ENCODE measurements at regions of chr7 and their contacts with region 1.

Region 1: DNA sequence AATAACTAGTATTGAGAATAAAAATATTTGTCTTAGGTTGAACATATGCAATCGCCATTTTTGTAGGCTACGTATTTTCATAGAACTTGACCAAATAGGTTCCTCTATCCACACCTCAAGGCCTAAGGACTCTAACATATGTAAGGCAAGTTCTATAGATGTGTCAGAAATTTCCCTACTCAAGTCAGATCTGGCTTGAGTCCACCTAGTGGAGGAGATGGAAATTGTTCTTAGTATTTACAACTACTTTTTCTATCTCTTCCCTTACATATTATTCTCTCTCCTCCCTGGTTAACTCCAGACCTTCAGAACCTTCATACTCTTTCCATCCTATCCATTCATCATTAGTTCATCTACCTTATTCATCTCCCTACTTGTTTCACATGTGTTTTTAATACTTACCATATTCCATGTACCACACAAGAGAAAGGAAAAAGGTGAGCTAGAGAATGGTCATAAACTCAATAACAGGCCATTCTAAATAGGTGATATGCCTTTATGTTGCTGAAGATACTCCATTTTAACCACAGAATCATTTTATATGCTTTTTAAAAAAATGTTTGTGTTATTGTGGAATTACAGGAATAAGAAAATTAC is 174.5 kb upstream of the HDAC9 start:
- DNase-seq: peak; percentile 68

Region 2: GRCh38 chr7:17680943-17681351 is 640.1 kb before region 1 on chr7:
- in situ Hi-C with region 1: loop called (anchors 25 kb)
- DNase-seq: peak; percentile 52

Region 3: GRCh38 chr7:18570890-18571478 is 249.9 kb after region 1 on chr7:
- in situ Hi-C with region 1: no loop called
- DNase-seq: peak; percentile 13